Prostate gland (tissue), 2 donors: ENCODE measurements at regions of chr3 and their contacts with region 1.

Region 1: GRCh38 chr3:187210545-187211327 is 13.4 kb downstream of the RTP1 start:
- DNase-seq: no peak
- H3K4me3 ChIP-seq: no peak overlapping the region
- H3K27ac ChIP-seq: peak overlapping the region; percentile 14 to 28
- H3K4me1 ChIP-seq: peaks cover 4% of the 10 kb centered on the region
- H3K27me3 ChIP-seq: no peaks in the 10 kb centered on the region
- CTCF ChIP-seq: no peak
- POLR2A ChIP-seq: no peak

Region 2: DNA sequence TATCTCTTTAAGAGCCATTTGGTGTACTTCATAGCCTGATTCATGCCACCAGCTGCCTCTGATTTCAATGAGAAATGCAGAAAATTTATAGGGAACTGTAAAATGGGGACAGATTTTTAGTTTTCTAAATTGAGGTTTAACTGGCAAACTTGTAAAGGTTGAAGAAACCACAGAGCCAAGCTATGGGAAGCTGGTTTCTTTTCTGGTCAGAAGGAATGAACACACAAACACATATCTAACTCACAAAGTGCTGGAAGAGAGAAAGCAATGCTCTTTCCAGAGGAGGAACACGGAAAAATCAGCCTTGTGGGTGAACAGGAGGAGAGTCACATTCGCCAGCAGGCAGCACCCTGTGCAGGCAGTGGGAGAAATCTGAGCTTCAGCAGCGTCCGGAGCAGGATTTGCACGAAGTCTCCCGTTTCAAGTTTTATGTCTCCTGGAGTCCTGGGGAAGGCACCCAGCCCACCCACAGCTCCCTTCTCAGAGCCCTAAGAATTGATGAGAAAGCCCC is 80.3 kb after region 1 on chr3:
- intact Hi-C with region 1: loop called (anchors 10 kb)
- DNase-seq: no peak
- H3K4me3 ChIP-seq: peak overlapping the region; percentile 12 to 21
- H3K27ac ChIP-seq: peak overlapping the region; percentile 5 to 47
- H3K4me1 ChIP-seq: no peaks in the 10 kb centered on the region
- H3K27me3 ChIP-seq: no peaks in the 10 kb centered on the region
- CTCF ChIP-seq: no peak
- POLR2A ChIP-seq: no peak